GM10248 (cell line): ENCODE measurements at regions of chr4 and their contacts with region 1.

Region 1: DNA sequence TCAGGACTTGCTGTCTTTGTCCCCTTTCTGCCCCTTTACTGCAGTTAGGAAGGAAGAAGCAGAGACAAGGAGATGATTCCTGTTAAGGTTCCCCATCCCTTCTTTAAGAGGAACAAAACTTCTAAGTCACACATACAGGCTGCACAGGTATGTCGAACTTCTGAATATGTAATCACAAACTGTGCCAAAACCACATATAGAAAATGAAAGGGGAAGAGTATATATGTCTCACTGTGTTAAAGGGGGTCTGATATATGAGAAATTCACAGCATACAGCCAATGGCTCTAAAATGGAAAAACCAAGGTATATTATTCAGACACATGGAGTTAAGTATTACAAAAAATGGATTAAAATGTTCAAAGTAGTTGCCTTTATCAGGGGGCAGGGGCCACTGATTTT is 11.7 kb downstream of the CFAP97 start:
- DNase-seq: peak; percentile 48
- CTCF ChIP-seq: no peak

Region 2: DNA sequence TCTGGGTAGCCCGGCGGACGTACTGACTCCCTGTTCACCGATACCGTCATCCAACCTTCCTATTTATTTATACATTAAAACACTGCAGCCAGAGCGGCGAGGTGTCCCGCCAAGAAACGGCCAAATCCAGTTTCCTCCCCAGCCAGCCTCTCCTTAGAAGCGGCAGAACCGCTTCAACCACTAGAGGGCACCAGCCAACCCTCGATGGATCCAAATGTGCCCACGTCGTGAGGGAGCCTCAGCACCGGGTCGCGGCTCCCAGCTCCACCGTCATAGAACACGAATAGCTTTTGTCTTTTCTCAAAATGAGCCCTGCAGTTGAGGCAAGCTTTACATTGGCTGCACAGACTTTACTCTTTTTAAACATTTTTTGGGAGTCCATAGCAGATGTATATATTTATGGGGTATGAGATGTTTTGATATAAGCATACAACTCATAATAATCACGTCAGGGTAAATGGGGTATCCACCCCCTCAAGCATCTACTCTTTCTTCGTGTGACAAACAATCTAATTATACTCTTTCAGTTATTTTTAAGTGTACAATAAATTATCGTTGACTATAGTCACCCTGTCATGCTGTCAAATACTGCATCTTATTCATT is 186.7 kb before region 1 on chr4:
- CTCF ChIA-PET with region 1: no interaction called
- POLR2A ChIA-PET with region 1: no interaction called
- DNase-seq: peak; percentile 87
- CTCF ChIP-seq: peak; percentile 96

Region 3: GRCh38 chr4:185209031-185209851 is 17.2 kb after region 1 on chr4 and contains the start of gene SNX25:
- CTCF ChIA-PET with region 1: interaction called, 12 read pairs
- POLR2A ChIA-PET with region 1: no interaction called
- DNase-seq: peak; percentile 90
- CTCF ChIP-seq: peak; percentile 49